Activated CD4-positive, alpha-beta T cell treated with anti-CD3 and anti-CD28 coated beads, Interleukin-2, amount 10 ng/mL, durations not matched to agents 7 days and 5 days (primary cell): ENCODE measurements at regions of chr14 and their contacts with region 1.

Region 1: GRCh38 chr14:73728717-73729330 is 14.6 kb upstream of the PNMA1 start:
- DNase-seq: peak; percentile 92
- H3K4me3 Mint-ChIP-seq: no peak overlapping the region
- H3K27ac Mint-ChIP-seq: peak overlapping the region; percentile 76
- H3K4me1 Mint-ChIP-seq: peaks cover 44% of the 10 kb centered on the region
- H3K27me3 Mint-ChIP-seq: no peaks in the 10 kb centered on the region

Region 2: DNA sequence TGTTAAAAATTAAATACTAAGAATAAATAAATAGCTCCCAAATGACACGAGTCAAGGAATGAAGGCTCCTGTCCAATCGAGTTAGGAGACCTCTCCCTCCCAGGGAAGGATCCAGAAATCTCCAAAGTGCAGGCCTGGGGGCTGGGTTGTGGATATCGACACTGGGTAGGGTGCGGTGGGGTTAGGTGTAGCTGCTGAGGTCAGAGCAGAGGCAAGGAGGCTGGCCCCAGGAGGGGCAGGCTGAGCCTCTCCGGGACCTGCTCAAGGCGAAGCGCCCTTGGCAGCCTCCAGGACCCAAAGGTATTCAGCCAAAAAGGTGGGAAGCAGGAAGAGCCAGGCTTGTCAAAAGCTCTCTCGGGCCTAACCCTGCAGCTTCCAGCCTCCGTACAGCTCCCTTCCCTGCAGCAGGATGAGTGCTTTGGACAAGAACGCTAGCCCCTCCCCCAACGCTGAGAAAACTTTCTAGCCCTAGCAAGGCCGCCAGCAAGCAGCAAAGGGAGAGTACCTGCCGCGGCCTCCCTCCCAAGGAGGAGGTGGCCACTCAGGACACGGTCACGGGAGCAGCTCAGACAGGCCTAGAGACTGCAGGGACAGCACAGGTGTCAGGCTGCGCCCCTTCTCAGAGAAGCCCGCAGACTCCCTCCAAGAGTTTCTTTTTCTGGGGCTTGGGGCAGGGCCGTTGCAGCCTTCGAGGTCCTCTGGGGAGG is 11.0 kb before region 1 on chr14:
- CTCF ChIA-PET with region 1: interaction called, 17 read pairs
- POLR2A ChIA-PET with region 1: no interaction called
- DNase-seq: no peak
- H3K4me3 Mint-ChIP-seq: no peak overlapping the region
- H3K27ac Mint-ChIP-seq: no peak overlapping the region
- H3K4me1 Mint-ChIP-seq: peaks cover 7% of the 10 kb centered on the region
- H3K27me3 Mint-ChIP-seq: no peaks in the 10 kb centered on the region

Region 3: GRCh38 chr14:73741386-73741875 is 12.6 kb after region 1 on chr14:
- CTCF ChIA-PET with region 1: interaction called, 78 read pairs
- POLR2A ChIA-PET with region 1: no interaction called
- DNase-seq: peak; percentile 81
- H3K4me3 Mint-ChIP-seq: peak overlapping the region; percentile 82
- H3K27ac Mint-ChIP-seq: peak overlapping the region; percentile 90
- H3K4me1 Mint-ChIP-seq: peaks cover 76% of the 10 kb centered on the region
- H3K27me3 Mint-ChIP-seq: no peaks in the 10 kb centered on the region

Region 4: DNA sequence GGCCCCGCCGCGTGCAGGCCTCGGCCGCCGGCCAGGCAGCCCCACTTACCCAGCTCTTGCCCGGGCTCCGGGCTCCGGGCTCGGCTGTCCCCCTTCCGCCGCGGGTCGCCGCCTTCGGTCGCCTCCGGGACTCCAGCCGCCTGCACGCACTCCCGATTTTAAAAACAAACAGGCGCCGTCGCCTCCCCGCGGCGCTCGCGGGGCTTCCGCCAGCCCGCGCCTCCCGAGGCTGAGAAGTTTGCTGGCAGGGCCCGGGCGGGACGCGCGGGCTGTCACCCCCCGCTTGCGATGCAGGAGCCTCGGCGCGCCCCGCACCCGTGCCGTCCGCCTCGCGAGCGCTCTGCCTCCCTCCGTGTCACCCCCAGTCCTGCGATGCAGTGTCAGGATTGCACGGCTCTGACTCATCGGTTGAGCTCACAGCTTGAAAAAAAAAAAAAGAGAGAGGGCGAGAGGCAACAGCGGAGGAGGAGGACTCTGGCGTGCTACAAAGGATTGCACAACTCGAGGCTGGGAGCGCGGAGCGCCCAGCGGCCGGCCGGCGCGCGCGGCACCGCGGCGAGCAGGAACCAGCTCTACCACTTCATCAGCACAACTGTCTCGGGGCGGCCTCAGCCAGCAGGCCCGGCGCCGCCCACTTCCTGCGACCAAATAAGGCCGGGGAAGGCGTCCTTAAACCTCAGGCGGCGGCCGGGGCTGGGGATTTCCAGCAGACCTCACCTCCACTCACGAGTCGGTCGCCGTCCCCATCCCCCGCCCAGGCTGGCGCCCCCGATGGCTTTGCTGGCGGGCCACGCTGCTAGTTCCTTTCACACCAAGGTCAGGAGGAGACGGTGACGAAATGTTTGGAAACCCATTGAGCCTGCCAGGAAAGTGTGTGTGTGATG is 31.1 kb after region 1 on chr14:
- CTCF ChIA-PET with region 1: interaction called, 15 read pairs
- POLR2A ChIA-PET with region 1: interaction called, 3 read pairs
- DNase-seq: peak; percentile 97
- H3K4me3 Mint-ChIP-seq: peak overlapping the region; percentile 89
- H3K27ac Mint-ChIP-seq: peak overlapping the region; percentile 93
- H3K4me1 Mint-ChIP-seq: peaks cover 78% of the 10 kb centered on the region
- H3K27me3 Mint-ChIP-seq: no peaks in the 10 kb centered on the region

Region 5: DNA sequence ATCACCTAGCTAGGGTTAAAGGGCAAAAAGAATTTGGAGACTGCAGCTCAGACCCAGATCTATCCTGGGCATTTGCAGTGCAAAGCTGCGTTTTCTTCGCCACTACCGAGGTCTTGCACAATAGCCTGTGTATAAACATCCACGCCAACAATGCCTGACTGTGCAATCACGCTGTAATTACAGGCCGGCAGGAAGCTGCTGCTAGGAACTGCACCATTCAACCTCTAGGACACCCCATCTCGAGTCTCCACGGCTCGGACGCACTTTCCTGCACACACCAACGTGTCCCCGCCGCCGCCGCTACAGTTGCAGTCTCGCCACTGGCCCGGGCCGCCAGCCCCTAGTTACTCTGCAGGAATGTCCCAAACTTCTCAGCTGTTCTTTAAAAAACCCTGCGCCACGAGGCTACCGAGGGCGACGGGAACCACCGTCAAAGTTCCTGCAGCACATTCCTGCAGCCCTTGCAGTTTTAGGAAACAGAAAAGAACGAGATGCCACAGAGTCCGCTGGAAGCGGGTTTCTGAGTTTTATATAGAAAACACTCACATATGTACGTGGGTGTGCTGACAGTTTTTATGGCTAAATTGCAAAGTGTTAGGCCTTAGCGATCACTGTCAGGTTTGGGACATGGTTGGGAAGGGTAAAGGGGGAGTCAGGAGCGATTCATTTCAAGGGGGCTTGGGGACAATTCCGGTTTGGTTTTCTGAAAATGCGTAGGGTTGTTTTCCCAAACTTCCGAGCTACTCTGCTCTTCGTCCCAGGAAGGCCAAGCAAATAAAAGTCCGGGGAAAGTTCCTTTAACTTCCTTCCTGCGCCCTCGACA is 57.3 kb after region 1 on chr14:
- CTCF ChIA-PET with region 1: interaction called, 11 read pairs
- POLR2A ChIA-PET with region 1: no interaction called
- DNase-seq: peak; percentile 76
- H3K4me3 Mint-ChIP-seq: peak overlapping the region; percentile 87
- H3K27ac Mint-ChIP-seq: peak overlapping the region; percentile 95
- H3K4me1 Mint-ChIP-seq: peaks cover 61% of the 10 kb centered on the region
- H3K27me3 Mint-ChIP-seq: no peaks in the 10 kb centered on the region

Region 6: GRCh38 chr14:73825551-73826188 is 96.8 kb after region 1 on chr14:
- CTCF ChIA-PET with region 1: interaction called, 43 read pairs
- POLR2A ChIA-PET with region 1: no interaction called
- DNase-seq: peak; percentile 83
- H3K4me3 Mint-ChIP-seq: no peak overlapping the region
- H3K27ac Mint-ChIP-seq: no peak overlapping the region
- H3K4me1 Mint-ChIP-seq: peaks cover 18% of the 10 kb centered on the region
- H3K27me3 Mint-ChIP-seq: peaks cover 5% of the 10 kb centered on the region